Activated naive CD4-positive, alpha-beta T cell treated with anti-CD3 and anti-CD28 coated beads for 36 hours (primary cell): ENCODE measurements at regions of chr3 and their contacts with region 1.

Region 1: DNA sequence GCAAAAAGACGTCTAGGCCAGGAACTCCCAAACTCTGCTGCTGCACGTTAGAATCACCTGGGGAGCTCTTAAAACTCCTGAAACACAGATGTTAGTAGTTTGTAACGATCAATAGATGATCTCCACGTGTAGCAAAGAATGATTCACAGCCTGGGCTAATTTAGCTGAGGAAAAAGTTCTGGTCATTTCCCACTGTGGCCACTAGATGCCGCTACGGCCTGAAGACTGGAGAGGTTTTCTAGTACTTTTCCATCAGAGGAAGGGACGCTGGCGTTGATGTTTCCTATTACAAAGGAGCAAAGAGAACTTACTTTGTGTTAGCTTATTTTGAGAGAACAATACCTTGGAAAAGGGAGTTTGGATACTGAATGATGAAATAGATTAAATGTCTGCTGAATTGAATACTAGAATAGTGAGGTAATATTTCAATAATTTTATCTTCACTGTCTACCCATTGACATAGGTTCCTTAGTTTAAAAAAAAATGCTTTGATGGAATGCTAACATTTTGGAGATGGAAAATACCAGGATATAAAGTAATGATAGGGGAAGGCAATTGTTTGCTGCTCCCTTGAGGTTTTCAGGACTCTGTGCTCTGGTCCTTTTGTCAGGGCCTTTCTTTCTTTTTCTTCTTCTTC is 159.1 kb downstream of the P3H2 start:
- DNase-seq: peak; percentile 87
- H3K4me3 Mint-ChIP-seq: no peak overlapping the region
- H3K27ac Mint-ChIP-seq: no peak overlapping the region
- H3K4me1 Mint-ChIP-seq: peaks cover 5% of the 10 kb centered on the region
- H3K27me3 Mint-ChIP-seq: peaks cover 6% of the 10 kb centered on the region

Region 2: DNA sequence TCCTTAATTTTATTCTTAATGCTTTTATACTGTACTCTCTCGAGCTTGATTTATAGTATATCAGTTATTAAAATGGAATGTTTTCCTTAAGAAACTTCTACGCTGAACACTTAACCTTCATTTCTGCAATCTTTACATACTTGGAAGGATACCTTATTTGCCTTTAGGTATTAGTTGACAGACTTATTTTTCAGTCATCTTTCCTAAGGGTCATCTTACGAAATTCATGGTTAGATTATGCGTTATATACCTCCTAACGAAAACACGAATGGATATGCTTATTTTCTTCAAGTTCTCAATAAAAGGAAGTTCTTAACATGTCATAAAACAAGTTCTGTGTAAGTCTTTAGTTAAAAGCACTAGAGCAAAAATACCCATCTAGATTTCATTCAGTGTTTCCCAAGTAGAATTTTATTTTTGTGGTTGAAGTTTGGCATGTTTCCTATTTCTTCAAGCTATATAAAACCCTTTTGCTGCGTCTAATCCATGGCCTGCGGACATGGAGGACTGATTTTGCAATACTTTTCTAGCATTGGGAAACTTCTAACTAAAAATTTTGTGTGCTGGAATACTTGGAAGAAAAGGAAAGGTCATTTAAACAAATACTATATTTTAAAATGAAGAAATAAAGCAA is 99.1 kb before region 1 on chr3:
- CTCF ChIA-PET with region 1: no interaction called
- intact Hi-C with region 1: no loop called
- DNase-seq: no peak
- H3K4me3 Mint-ChIP-seq: no peak overlapping the region
- H3K27ac Mint-ChIP-seq: no peak overlapping the region
- H3K4me1 Mint-ChIP-seq: no peaks in the 10 kb centered on the region
- H3K27me3 Mint-ChIP-seq: no peaks in the 10 kb centered on the region

Region 3: GRCh38 chr3:190012314-190012782 is 50.7 kb after region 1 on chr3:
- CTCF ChIA-PET with region 1: no interaction called
- intact Hi-C with region 1: no loop called
- DNase-seq: no peak
- H3K4me3 Mint-ChIP-seq: no peak overlapping the region
- H3K27ac Mint-ChIP-seq: no peak overlapping the region
- H3K4me1 Mint-ChIP-seq: no peaks in the 10 kb centered on the region
- H3K27me3 Mint-ChIP-seq: peaks cover 17% of the 10 kb centered on the region

Region 4: DNA sequence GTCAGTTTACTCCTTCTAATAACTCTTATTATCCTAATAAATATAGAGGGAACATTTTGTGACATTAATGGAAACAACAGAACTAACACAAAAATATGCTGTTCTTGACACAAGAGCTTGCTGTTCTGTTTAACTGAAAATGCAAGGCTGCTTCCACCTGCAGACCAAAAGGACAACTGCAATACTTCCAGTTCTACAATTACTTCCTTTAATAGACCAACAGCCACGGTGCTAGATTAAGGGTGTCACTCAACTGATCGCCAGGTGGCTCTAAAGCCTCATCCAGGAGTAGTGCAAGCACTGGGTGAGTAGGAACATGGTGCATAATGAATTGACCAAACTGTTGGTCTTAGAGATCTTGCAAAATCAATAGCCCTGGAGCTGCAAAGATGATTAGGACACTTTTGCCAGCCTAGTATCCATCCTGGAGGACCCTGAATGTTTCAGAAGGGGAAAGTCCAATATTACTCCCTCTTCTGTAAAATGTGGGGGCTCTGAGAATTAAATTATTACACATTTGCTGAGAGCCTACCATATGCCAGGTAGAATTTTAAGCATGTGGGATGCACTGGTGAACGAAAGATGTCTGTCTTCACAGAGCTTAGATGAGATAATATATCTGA is 422.7 kb after region 1 on chr3:
- CTCF ChIA-PET with region 1: interaction called, 5 read pairs
- intact Hi-C with region 1: loop called (anchors 2 kb)
- DNase-seq: peak; percentile 48
- H3K4me3 Mint-ChIP-seq: no peak overlapping the region
- H3K27ac Mint-ChIP-seq: no peak overlapping the region
- H3K4me1 Mint-ChIP-seq: peaks cover 8% of the 10 kb centered on the region
- H3K27me3 Mint-ChIP-seq: peaks cover 5% of the 10 kb centered on the region